ENCODE measurements at regions of chr22 and their contacts with region 1.

Region 1: DNA sequence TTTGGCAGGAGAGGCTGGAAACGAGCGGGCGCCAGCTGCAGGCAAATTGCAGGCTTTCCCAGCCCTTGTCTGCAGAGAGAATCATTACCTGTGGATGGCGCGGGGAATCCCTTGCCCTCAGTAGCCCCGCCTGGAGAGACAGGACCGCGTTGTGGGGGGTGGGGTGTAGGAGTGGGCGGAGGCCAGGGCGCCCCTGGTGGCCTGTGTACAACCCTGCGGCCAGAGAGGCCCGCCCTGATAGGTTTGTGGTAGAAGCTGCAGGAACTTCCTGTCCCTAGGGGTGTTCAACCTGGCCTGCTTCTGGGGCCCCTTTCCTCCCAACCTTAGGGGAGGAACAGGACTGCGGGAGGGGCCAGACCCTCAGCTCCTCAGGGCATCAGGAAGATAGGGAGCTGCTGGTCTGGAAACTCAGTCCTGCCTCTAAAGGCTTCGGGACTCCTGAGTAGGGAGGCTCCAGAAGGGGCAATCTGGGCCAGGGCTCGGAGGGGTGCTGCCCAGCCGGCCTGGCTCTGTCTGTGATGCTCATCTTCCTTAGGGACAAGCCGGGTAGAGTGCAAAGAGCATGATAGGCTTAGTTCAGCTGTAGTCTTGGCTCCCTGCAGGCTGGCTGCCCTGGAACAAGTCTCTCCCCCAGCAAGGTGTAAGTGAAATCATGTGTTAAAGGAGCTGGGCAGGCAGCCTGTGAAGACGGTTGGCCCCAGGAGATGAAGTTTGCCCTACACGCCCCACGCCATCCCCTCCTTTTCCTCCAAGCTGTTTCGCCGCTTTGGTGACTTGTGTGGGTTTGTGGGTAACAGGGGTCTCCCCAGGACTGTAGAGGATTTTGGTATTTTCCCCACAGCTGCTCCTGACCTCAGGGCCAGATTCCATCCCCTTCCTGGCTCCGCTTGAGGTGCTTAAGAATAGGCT is 24.1 kb upstream of the SUSD2 start:
- DNase-seq: peak; percentile 94
- H3K4me3 ChIP-seq: peak overlapping the region; percentile 75 to 78
- H3K27ac ChIP-seq: peak overlapping the region; percentile 35 to 39; a peak in 3 of 4 replicates
- H3K4me1 ChIP-seq: peaks cover 15 to 41% of the 10 kb centered on the region in 2 experiments; a peak in 3 of 4 replicates
- H3K27me3 ChIP-seq: no peaks in the 10 kb centered on the region
- CTCF ChIP-seq: peak; percentile 94
- EP300 ChIP-seq: no peak
- RAD21 ChIP-seq: peak; percentile 40

Region 2: GRCh38 chr22:24133187-24133965 is 23.8 kb before region 1 on chr22:
- CTCF ChIA-PET with region 1: interaction called, 22 read pairs
- POLR2A ChIA-PET with region 1: no interaction called
- DNase-seq: no peak
- H3K4me3 ChIP-seq: no peak overlapping the region
- H3K27ac ChIP-seq: no peak overlapping the region
- H3K4me1 ChIP-seq: peaks cover 10 to 14% of the 10 kb centered on the region in 2 experiments; a peak in 1 of 4 replicates
- H3K27me3 ChIP-seq: no peaks in the 10 kb centered on the region
- CTCF ChIP-seq: peak; percentile 24; the same call in 1 of the 2 replicates
- EP300 ChIP-seq: no peak
- RAD21 ChIP-seq: peak; percentile 51

Region 3: DNA sequence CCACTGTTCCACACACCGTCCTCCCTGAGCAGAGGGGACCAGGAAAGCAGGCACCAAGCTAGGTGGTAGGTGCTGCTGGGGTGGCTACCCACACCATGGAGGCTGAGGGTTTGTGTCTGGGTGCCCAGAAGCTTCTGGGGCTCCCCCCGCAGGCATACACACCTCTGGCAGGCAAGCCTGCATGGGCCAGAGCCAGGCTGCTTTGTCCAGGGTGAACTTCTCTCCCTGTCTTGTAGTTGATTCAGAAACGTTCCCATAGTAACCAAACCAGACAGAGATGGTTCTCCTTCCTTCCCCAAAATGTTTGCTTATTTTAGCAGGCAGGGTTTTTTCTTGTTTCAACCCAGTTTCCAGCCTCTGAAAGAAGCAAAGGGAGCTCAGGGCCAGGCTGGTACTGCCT is 16.8 kb before region 1 on chr22:
- CTCF ChIA-PET with region 1: interaction called, 63 read pairs
- POLR2A ChIA-PET with region 1: no interaction called
- DNase-seq: no peak
- H3K4me3 ChIP-seq: no peak overlapping the region
- H3K27ac ChIP-seq: no peak overlapping the region; a peak in 1 of 4 replicates
- H3K4me1 ChIP-seq: peaks cover 12 to 34% of the 10 kb centered on the region in 2 experiments; a peak in 1 of 4 replicates
- H3K27me3 ChIP-seq: no peaks in the 10 kb centered on the region
- CTCF ChIP-seq: no peak
- EP300 ChIP-seq: no peak
- RAD21 ChIP-seq: no peak

Region 4: DNA sequence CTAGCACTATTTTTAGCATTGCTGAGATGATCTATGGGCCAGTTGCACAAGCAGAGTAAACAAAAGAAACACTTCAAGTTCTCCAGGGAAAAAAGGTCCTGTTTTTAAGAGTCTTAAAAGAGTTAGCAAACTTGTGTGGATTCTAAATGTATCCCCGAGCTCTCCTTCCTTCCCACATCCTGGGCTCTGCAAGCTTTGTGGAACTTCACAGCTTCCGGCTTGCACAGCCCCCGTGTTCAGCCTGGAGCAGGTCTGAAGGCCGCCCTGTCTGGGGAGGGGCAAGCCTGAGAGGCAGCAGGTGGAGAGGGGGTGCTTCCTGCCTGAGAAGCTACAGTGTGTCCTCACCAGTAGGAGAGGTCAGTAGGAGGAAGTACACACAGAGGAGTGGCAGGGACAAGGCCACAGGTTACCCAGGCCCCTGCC is 11.0 kb before region 1 on chr22:
- CTCF ChIA-PET with region 1: interaction called, 63 read pairs
- POLR2A ChIA-PET with region 1: no interaction called
- DNase-seq: peak; percentile 50
- H3K4me3 ChIP-seq: peak overlapping the region in 1 of 2 experiments; percentile 16; a peak in 1 of 4 replicates
- H3K27ac ChIP-seq: peak overlapping the region; percentile 77 to 92
- H3K4me1 ChIP-seq: peaks cover 21 to 50% of the 10 kb centered on the region in 2 experiments
- H3K27me3 ChIP-seq: no peaks in the 10 kb centered on the region
- CTCF ChIP-seq: no peak
- EP300 ChIP-seq: no peak
- RAD21 ChIP-seq: no peak

Region 5: DNA sequence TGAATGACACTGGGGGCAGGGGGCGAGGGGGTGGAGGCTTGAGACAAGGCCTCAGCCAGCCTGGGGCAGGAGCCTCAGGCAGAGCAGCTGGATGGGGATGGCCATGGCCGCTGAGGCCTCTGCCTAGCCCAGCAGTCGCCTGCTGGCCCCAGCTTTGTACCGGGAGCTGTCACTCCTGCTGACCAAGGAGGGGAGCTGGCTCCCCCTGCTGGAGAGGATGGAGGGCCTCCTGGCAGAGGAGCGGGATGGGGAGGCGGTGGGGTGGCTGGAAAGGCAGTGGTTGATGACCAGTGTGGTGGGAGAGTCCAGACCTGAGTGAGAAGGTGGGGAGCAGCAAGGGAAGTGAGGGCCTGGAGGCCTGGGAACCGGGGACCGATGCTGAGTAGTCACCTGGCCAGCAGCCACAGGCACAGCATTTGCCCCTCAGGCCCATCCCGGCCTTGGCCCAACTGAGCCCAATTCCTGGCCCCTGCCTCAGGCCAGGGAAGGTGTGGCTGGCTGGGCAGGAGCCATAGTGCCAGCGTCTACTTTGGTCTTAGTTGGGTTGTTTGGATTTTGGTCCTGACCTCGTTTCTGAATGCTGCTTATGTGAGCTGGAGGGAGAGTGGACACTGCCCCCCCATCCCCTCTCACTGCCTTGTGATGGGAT is 18.1 kb after region 1 on chr22:
- CTCF ChIA-PET with region 1: interaction called, 83 read pairs
- POLR2A ChIA-PET with region 1: no interaction called
- DNase-seq: peak; percentile 91
- H3K4me3 ChIP-seq: no peak overlapping the region
- H3K27ac ChIP-seq: no peak overlapping the region; a peak in 1 of 4 replicates
- H3K4me1 ChIP-seq: peaks cover 0 to under 1% of the 10 kb centered on the region in 2 experiments; a peak in 1 of 4 replicates
- H3K27me3 ChIP-seq: no peaks in the 10 kb centered on the region
- CTCF ChIP-seq: peak; percentile 80
- EP300 ChIP-seq: no peak
- RAD21 ChIP-seq: peak; percentile 86

Region 6: DNA sequence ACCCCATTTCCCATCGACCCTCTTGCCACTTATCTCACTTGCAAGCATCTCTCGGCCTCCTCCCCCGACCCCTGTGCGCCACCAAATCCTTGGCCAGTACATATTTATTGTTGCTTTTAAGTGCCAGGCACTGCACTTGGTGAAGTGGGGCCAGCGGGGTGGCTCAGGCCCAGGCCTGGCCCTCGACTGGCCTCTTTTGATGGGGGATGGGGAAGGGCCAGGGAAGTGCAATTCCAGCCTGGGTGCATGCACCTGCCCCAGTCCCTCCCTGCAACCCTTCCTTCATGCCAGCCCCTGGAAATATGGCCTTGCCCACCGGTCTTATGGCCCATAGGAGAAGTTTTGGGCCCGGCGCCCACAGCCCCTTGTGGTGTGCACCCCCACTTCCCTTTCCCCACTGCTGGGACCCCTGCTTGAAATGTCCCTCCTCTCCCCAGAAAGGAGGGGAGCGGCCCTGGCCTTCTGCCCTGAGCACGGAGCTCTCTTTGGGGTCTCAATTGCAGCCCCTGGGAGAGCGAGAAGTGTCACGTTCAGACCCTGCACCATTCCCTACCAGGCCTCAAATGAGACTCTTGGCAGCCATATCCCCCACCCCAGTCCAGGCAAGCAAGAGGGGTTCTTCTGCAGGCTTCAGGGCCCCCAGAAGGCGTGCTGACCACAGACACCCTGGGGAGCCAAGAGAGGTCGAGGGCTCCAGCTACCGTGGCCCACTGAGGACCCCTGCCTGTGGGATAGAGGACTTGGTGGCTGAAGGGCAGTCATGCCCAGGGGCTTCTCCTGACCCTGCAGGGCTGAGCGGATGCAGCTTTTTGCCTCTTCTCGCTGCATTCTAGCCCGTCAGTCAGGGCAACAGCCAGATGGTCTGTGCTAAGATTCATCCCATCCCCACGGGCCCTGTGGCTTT is 25.1 kb after region 1 on chr22:
- CTCF ChIA-PET with region 1: interaction called, 11 read pairs
- POLR2A ChIA-PET with region 1: no interaction called
- DNase-seq: peak; percentile 53
- H3K4me3 ChIP-seq: no peak overlapping the region
- H3K27ac ChIP-seq: no peak overlapping the region
- H3K4me1 ChIP-seq: peaks cover 0 to 12% of the 10 kb centered on the region in 2 experiments; a peak in 1 of 4 replicates
- H3K27me3 ChIP-seq: no peaks in the 10 kb centered on the region
- CTCF ChIP-seq: peak; percentile 35
- EP300 ChIP-seq: no peak
- RAD21 ChIP-seq: peak; percentile 35

Measured in SK-N-SH (cell line).